ENCODE measurements at regions of chr14 and their contacts with region 1.

Region 1: GRCh38 chr14:75176142-75176820 is at the start of gene TMED10:
- DNase-seq: peak; percentile 95
- ATAC-seq: peak; percentile 81
- H3K4me3 Mint-ChIP-seq: peak within 1 kb of the TSS; percentile 94
- H3K27ac Mint-ChIP-seq: peak within 1 kb of the TSS; percentile 95
- H3K4me1 Mint-ChIP-seq: peaks cover 39% of the 10 kb centered on the region
- H3K27me3 Mint-ChIP-seq: no peaks in the 10 kb centered on the region
- total RNA-seq, gene TMED10: 179 to 253 TPM

Region 2: DNA sequence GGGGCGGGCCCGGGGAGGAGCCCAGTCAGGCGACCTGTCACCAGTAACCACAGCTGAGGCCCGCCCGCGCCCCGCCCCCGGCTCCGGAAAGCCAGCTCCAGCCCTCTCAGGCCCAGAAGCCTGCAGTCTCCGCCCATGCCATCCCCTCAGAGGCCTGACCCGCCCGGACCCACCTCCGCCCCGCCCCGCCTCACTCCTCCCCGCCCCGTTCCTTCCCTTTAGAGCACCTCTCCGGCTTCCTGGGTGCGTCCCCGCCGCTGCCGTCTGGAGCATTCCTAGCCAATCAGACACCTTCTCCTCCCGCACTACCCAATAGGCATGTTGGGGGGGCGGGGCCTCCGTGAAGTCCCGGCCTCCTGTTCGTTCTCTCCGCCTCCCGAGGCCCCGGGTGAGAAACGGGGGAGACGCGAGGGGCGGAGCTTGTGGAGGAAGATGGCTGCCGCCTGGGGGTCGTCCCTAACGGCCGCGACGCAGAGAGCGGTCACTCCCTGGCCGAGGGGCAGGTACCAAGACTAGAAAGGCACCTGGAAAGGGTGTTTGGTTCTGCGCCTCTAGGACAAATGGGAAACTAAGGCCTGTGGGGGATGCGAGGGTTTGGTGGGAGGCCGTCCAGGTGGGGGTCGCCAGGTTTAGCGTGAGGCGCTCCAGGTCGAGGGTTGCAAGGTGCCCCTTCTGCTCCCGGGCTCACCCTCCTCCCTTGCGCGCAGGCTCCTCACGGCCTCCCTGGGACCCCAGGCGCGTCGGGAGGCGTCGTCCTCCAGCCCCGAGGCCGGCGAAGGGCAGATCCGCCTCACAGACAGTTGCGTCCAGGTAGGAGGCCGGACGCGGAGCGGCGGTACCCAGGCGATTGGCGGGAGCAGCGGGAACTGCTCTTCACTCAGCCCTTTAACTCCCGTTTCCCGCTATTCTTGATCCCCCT is 682.7 kb before region 1 on chr14 and contains the start of gene ISCA2:
- CTCF ChIA-PET with region 1: no interaction called
- POLR2A ChIA-PET with region 1: no interaction called
- intact Hi-C with region 1: loop called in 1 of 2 experiments (anchors 1 kb)
- DNase-seq: peak; percentile 100
- ATAC-seq: peak; percentile 96
- H3K4me3 Mint-ChIP-seq: no peak within 1 kb of the TSS
- H3K27ac Mint-ChIP-seq: peak within 1 kb of the TSS; percentile 89
- H3K4me1 Mint-ChIP-seq: peaks cover 23% of the 10 kb centered on the region
- H3K27me3 Mint-ChIP-seq: no peaks in the 10 kb centered on the region
- total RNA-seq, gene ISCA2: 29.5 to 35.9 TPM

Region 3: GRCh38 chr14:75002392-75003249 is 173.7 kb before region 1 on chr14 and contains the start of gene EIF2B2:
- CTCF ChIA-PET with region 1: no interaction called
- POLR2A ChIA-PET with region 1: no interaction called
- intact Hi-C with region 1: loop called (anchors 1 kb)
- DNase-seq: peak; percentile 99
- ATAC-seq: peak; percentile 97
- H3K4me3 Mint-ChIP-seq: peak within 1 kb of the TSS; percentile 87
- H3K27ac Mint-ChIP-seq: peak within 1 kb of the TSS; percentile 88
- H3K4me1 Mint-ChIP-seq: peaks cover 34% of the 10 kb centered on the region
- H3K27me3 Mint-ChIP-seq: no peaks in the 10 kb centered on the region
- total RNA-seq, gene EIF2B2: 55.6 to 69.8 TPM

Region 4: DNA sequence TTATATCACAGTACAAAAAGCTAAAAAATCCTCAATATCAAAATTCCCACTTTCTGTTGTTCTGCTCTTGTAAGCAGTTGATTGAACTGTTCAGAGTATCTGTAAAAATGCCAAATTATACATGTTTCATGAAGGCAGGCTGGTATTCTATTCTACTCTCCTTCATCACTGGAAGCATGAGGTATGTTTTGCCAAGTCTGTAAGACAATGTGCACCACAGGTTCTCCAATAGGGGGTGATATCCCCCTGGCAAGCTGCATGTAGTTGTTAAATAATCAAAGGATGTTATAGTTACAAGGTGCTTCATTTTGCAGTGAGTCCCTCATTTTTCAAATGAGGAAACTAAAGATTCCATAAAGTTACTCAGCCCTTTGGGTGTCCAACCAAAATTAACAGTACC is 34.3 kb before region 1 on chr14:
- CTCF ChIA-PET with region 1: interaction called, 3 read pairs
- POLR2A ChIA-PET with region 1: interaction called, 3 read pairs
- intact Hi-C with region 1: loop called in 1 of 2 experiments (anchors 5 kb)
- DNase-seq: peak; percentile 38
- ATAC-seq: peak; percentile 71
- H3K4me3 Mint-ChIP-seq: no peak overlapping the region
- H3K27ac Mint-ChIP-seq: no peak overlapping the region
- H3K4me1 Mint-ChIP-seq: peaks cover 58% of the 10 kb centered on the region
- H3K27me3 Mint-ChIP-seq: no peaks in the 10 kb centered on the region

Region 5: DNA sequence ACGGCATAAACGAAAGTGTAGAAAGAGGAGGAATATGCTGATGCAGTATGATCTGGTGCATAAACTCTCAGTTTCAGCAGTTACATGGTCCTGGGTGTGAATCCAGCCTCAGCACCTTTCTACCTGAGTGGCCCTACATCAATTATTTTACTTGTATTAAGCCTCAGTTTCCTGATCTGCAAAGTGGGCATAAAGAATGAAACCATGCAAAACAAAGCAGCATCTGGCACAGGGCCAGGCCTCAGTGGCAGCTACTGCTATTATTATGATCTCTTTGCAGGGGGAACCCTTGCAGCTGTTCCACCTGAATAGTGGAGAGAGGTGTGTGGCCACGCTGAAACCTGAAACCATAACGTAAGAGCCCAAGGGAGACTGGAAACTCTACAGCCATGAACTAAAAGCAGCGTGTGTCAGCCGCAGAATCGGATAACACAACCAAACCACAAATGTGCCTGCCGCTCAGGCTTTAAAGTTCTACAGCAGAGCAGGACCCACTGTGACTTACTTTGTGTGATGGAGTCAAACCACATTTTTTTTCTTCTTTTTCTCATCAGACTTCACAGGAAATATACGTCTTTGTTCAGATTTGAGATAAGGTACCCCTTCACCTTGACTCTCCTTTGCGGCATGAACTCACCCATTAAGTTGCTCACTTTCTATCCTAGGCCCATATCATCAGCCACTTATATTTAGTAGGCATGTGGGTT is 73.1 kb after region 1 on chr14:
- CTCF ChIA-PET with region 1: no interaction called
- POLR2A ChIA-PET with region 1: interaction called, 4 read pairs
- intact Hi-C with region 1: loop called (anchors 1 kb)
- DNase-seq: peak; percentile 91
- ATAC-seq: peak; percentile 81
- H3K4me3 Mint-ChIP-seq: peak overlapping the region; percentile 11
- H3K27ac Mint-ChIP-seq: peak overlapping the region; percentile 82
- H3K4me1 Mint-ChIP-seq: peaks cover 57% of the 10 kb centered on the region
- H3K27me3 Mint-ChIP-seq: peaks cover 2% of the 10 kb centered on the region

Region 6: DNA sequence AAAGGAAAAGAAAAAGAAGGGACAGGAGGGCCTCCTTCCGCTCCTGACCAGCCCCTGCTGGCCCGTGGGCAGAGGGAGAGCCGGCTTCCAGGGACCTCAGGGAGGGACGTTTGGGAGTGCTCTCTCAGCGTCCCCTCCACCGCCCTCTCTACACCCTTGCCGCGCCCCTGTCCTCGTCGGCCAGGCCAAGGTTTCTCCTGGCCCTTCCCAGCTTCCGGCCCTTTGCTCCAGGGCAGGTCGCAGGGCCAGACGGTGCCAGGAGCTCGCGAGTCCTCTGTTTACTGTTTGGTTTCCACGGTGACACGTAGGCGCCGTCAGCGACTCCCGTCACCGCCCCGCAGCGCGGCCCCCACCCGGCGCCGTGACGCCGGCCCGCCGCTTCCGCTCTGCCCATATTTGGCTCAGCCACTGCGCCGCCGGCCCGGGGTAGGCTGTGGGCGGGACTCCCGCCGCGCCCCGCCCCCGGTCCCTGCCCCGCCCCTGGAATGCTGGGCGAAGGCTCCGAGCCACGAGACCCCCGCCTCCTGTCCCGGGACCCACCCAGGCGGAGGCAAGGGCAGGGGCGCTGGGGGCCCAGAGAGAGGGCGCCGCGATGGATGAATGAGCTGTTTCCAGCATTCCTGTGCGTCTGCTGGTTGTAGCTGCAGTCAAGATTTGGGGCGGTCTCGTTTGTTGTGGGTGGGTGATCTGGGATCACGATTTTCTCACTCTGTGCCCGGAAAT is 117.8 kb after region 1 on chr14:
- CTCF ChIA-PET with region 1: interaction called, 7 read pairs
- POLR2A ChIA-PET with region 1: interaction called, 6 read pairs
- intact Hi-C with region 1: loop called (anchors 1 to 2 kb)
- DNase-seq: peak; percentile 97
- ATAC-seq: peak; percentile 96
- H3K4me3 Mint-ChIP-seq: peak overlapping the region; percentile 73
- H3K27ac Mint-ChIP-seq: peak overlapping the region; percentile 85
- H3K4me1 Mint-ChIP-seq: peaks cover 22% of the 10 kb centered on the region
- H3K27me3 Mint-ChIP-seq: peaks cover 3% of the 10 kb centered on the region

Region 7: DNA sequence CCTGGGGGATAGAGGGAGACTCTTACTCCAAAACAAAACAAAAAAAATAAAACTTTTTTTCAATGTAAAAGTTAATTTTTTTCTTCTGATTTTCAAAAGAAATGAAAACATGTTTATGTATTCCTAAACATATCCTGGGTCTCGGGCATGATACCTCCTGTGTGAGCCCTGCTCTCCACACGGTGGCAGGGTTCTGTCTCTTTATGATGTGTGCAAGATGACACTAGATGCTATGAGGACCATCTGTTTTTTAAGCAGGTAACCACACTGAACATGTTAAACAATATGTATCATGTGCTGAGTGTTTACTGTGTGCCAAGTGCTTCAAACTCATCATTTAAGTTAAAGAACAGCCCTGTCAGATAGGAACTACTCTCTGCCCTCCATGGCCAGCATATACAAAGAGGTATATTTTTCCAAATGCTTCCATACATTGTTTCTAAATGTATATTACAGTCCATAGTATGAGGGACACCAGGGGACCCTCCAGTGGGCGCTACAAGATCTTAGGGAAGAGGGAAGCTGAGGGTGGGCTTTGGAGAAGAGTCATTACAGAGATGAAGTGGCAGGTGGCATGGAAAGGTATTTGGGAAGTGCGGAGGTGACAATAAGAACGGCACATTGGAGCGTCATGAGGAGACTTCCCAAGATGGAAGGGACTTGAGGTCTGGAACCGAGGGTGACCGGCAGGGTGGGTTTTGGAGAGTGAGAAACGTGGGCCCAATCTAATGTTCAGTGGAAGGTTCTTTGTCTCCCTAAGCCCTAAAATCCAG is 130.8 kb after region 1 on chr14:
- CTCF ChIA-PET with region 1: no interaction called
- POLR2A ChIA-PET with region 1: no interaction called
- intact Hi-C with region 1: no loop called
- DNase-seq: peak; percentile 60
- ATAC-seq: peak; percentile 67
- H3K4me3 Mint-ChIP-seq: no peak overlapping the region
- H3K27ac Mint-ChIP-seq: no peak overlapping the region
- H3K4me1 Mint-ChIP-seq: peaks cover 20% of the 10 kb centered on the region
- H3K27me3 Mint-ChIP-seq: no peaks in the 10 kb centered on the region

Region 8: GRCh38 chr14:75660630-75661494 is 484.6 kb after region 1 on chr14 and contains the starts of genes ERG28 and TTLL5:
- CTCF ChIA-PET with region 1: no interaction called
- POLR2A ChIA-PET with region 1: interaction called, 4 read pairs
- intact Hi-C with region 1: loop called (anchors 1 kb)
- DNase-seq: peak; percentile 97
- ATAC-seq: peak; percentile 99
- H3K4me3 Mint-ChIP-seq: peak within 1 kb of the TSS; percentile 96
- H3K27ac Mint-ChIP-seq: peak within 1 kb of the TSS; percentile 99
- H3K4me1 Mint-ChIP-seq: peaks cover 17% of the 10 kb centered on the region
- H3K27me3 Mint-ChIP-seq: no peaks in the 10 kb centered on the region
- total RNA-seq, gene ERG28: 19.1 to 23.7 TPM
- total RNA-seq, gene TTLL5: 27.3 to 38.6 TPM

Region 9: GRCh38 chr14:75675265-75675960 is 499.1 kb after region 1 on chr14:
- CTCF ChIA-PET with region 1: no interaction called
- POLR2A ChIA-PET with region 1: no interaction called
- intact Hi-C with region 1: no loop called
- DNase-seq: no peak
- ATAC-seq: no peak
- H3K4me3 Mint-ChIP-seq: no peak overlapping the region
- H3K27ac Mint-ChIP-seq: no peak overlapping the region
- H3K4me1 Mint-ChIP-seq: peaks cover 25% of the 10 kb centered on the region
- H3K27me3 Mint-ChIP-seq: no peaks in the 10 kb centered on the region

Measured in activated CD4-positive, alpha-beta T cell treated with anti-CD3 and anti-CD28 coated beads for 36 hours (primary cell).